ENCODE measurements at regions of chr16 and their contacts with region 1.

Region 1: GRCh38 chr16:82074019-82074558 is 39.0 kb downstream of the HSD17B2 start:
- DNase-seq: no peak
- H3K4me3 Mint-ChIP-seq: no peak overlapping the region
- H3K27ac Mint-ChIP-seq: no peak overlapping the region
- H3K4me1 Mint-ChIP-seq: peaks cover 18% of the 10 kb centered on the region
- H3K27me3 Mint-ChIP-seq: peaks cover 18% of the 10 kb centered on the region

Region 2: DNA sequence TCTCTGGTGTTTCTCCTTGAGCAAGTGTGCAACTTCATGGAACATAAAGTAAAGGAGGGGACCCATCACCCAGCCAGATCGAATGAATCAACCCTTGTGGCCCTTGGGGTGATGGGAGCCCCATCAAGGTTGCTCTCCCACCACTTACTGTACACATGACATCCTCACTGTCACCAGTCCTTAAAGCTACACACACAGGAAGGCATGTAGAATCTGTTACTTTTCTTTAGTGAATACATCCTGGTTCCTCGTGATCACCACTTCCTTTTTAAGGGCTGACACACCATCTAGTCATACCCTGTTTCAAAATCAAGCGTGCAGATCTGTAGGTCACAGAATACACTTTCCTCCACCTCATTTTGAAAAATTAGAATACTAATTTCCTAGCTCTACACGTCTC is 118.6 kb after region 1 on chr16:
- intact Hi-C with region 1: loop called (anchors 2 kb)
- DNase-seq: peak; percentile 7
- H3K4me3 Mint-ChIP-seq: peak overlapping the region; percentile 35
- H3K27ac Mint-ChIP-seq: peak overlapping the region; percentile 83
- H3K4me1 Mint-ChIP-seq: peaks cover 20% of the 10 kb centered on the region
- H3K27me3 Mint-ChIP-seq: peaks cover 17% of the 10 kb centered on the region

Measured in activated T-helper 1 cell treated with anti-CD3 and anti-CD28 coated beads, Interleukin-12 subunit alpha, Interleukin-12 subunit beta, Interleukin-2, Interleukin-4 antibody, amounts not matched to agents 30 ng/mL and 10 ng/mL and 1 ng/mL, durations not matched to agents 14 hours and 24 hours and 36 hours (primary cell).